ENCODE measurements at regions of chr7 and their contacts with region 1.

Region 1: DNA sequence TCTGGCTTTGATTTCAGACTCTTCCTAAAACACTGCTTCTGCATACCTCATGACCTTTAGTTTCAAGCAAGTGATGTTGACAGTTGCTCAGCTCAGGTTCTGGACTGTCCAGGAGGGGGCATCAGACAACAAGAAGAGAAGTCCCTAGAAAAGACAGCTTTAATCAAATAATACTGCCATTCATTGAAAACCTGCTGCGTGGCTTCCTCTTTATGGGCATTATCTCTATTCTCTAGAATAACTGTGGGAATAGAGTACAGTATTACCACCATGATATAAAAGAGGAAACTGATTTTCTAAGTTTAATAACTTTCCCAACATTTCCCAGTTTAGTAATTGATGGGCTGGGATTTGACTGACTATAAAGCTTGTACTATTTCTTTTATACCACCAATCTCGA is 170.4 kb downstream of the SNX13 start:
- DNase-seq: peak; percentile 60
- H3K4me3 Mint-ChIP-seq: no peak overlapping the region
- H3K27ac Mint-ChIP-seq: no peak overlapping the region
- H3K4me1 Mint-ChIP-seq: peaks cover 6% of the 10 kb centered on the region
- H3K27me3 Mint-ChIP-seq: no peaks in the 10 kb centered on the region

Region 2: GRCh38 chr7:17882685-17883084 is 112.8 kb after region 1 on chr7:
- CTCF ChIA-PET with region 1: no interaction called
- POLR2A ChIA-PET with region 1: no interaction called
- DNase-seq: no peak
- H3K4me3 Mint-ChIP-seq: no peak overlapping the region
- H3K27ac Mint-ChIP-seq: no peak overlapping the region
- H3K4me1 Mint-ChIP-seq: no peaks in the 10 kb centered on the region
- H3K27me3 Mint-ChIP-seq: no peaks in the 10 kb centered on the region

Region 3: GRCh38 chr7:17991866-17992648 is 222.1 kb after region 1 on chr7:
- CTCF ChIA-PET with region 1: interaction called, 21 read pairs
- POLR2A ChIA-PET with region 1: no interaction called
- DNase-seq: no peak
- H3K4me3 Mint-ChIP-seq: no peak overlapping the region
- H3K27ac Mint-ChIP-seq: no peak overlapping the region
- H3K4me1 Mint-ChIP-seq: peaks cover 2% of the 10 kb centered on the region
- H3K27me3 Mint-ChIP-seq: peaks cover 1% of the 10 kb centered on the region

Region 4: DNA sequence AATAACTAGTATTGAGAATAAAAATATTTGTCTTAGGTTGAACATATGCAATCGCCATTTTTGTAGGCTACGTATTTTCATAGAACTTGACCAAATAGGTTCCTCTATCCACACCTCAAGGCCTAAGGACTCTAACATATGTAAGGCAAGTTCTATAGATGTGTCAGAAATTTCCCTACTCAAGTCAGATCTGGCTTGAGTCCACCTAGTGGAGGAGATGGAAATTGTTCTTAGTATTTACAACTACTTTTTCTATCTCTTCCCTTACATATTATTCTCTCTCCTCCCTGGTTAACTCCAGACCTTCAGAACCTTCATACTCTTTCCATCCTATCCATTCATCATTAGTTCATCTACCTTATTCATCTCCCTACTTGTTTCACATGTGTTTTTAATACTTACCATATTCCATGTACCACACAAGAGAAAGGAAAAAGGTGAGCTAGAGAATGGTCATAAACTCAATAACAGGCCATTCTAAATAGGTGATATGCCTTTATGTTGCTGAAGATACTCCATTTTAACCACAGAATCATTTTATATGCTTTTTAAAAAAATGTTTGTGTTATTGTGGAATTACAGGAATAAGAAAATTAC is 551.2 kb after region 1 on chr7:
- CTCF ChIA-PET with region 1: interaction called, 13 read pairs
- POLR2A ChIA-PET with region 1: no interaction called
- DNase-seq: no peak
- H3K4me3 Mint-ChIP-seq: no peak overlapping the region
- H3K27ac Mint-ChIP-seq: no peak overlapping the region
- H3K4me1 Mint-ChIP-seq: no peaks in the 10 kb centered on the region
- H3K27me3 Mint-ChIP-seq: no peaks in the 10 kb centered on the region

Region 5: GRCh38 chr7:18345641-18346234 is 575.8 kb after region 1 on chr7:
- CTCF ChIA-PET with region 1: interaction called, 15 read pairs
- POLR2A ChIA-PET with region 1: no interaction called
- DNase-seq: peak; percentile 25
- H3K4me3 Mint-ChIP-seq: no peak overlapping the region
- H3K27ac Mint-ChIP-seq: no peak overlapping the region
- H3K4me1 Mint-ChIP-seq: no peaks in the 10 kb centered on the region
- H3K27me3 Mint-ChIP-seq: peaks cover 19% of the 10 kb centered on the region

Measured in activated CD4-positive, alpha-beta memory T cell treated with anti-CD3 and anti-CD28 coated beads, Interleukin-2, amount 10 ng/mL, durations not matched to agents 7 days and 5 days (primary cell).